ENCODE measurements at regions of chr1 and their contacts with region 1.

Region 1: DNA sequence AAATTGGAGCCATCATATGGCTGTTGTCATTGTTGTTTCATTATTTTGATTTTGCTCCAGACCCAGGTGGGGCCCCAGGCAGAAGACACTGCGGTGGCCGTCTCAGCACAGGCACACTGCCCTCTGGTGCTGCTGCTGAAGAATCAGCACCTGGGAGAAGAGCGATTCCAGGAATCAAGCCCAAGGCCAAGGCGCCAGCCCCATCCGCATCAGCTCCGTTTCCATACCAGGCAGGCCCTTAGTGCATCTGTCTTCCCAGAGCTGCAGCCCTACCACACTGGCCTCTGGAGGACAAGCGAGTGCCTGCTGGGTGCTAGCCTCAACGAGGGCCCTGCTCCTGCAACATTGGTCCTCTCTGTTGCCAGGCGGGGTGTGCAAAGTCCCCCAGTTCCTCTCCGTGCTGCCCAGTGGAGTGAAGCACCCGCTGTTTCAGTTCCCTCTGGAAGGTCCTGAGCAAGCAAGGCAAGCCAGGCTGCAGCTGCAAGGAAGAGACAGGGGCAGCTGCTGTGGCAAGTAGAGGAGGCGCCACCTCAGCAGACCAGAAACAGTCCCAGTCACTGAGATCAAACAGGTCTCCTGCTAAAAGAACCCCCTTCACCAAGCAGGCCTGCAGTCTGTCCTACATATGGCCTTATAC is 5.2 kb downstream of the GRIK3 start:
- DNase-seq: peak; percentile 95
- H3K4me3 ChIP-seq: peak overlapping the region; percentile 40
- H3K27ac ChIP-seq: peak overlapping the region; percentile 95
- H3K4me1 ChIP-seq: peaks cover 91% of the 10 kb centered on the region
- CTCF ChIP-seq: peak; percentile 81

Region 2: GRCh38 chr1:36864182-36864822 is 164.8 kb before region 1 on chr1:
- CTCF ChIA-PET with region 1: interaction called, 4 read pairs
- POLR2A ChIA-PET with region 1: interaction called, 3 read pairs
- intact Hi-C with region 1: loop called (anchors 2 kb)
- DNase-seq: peak; percentile 66
- H3K4me3 ChIP-seq: no peak overlapping the region
- H3K27ac ChIP-seq: no peak overlapping the region
- H3K4me1 ChIP-seq: peaks cover 38% of the 10 kb centered on the region
- CTCF ChIP-seq: peak; percentile 95

Region 3: GRCh38 chr1:36885538-36886357 is 143.4 kb before region 1 on chr1:
- CTCF ChIA-PET with region 1: no interaction called
- POLR2A ChIA-PET with region 1: no interaction called
- intact Hi-C with region 1: loop called (anchors 2 kb)
- DNase-seq: no peak
- H3K4me3 ChIP-seq: peak overlapping the region; percentile 37
- H3K27ac ChIP-seq: peak overlapping the region; percentile 92
- H3K4me1 ChIP-seq: peaks cover 75% of the 10 kb centered on the region
- CTCF ChIP-seq: peak; percentile 39; the same call in 1 of the 2 replicates

Region 4: DNA sequence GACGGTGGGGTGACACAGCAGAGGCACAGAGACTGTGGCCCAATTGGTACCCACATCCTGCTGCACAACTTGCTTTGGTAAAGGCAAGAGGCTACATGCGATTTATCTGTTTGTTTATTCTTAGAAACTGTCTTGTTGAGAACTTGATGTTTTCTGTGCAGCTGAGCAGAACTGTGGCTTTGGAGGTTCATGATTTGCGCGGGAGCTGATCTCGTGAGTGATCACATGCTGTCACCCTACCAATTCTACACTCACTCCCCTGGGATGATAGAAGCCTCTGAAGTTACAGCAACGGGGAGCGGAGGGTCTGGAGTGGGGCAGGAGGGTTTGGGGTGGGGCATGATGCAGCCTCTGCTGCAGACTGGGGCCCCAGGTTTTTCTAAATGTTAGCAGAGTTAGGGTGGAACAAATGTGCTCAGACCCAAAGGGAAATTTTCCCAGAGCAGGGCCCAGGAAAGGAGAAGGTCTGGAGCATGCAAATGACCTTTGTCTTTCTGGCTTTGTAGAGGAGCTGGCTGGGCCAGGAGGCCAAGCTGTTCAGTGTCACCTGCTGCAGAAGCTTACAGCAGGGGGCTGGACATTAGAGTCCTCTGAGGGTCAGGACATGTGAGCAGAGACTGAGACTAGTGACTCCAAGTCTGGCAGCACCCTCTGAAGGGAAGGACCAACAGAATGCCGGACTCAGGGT is 78.4 kb before region 1 on chr1:
- CTCF ChIA-PET with region 1: no interaction called
- POLR2A ChIA-PET with region 1: interaction called, 25 read pairs
- intact Hi-C with region 1: loop called (anchors 1 kb)
- DNase-seq: peak; percentile 97
- H3K4me3 ChIP-seq: peak overlapping the region; percentile 44
- H3K27ac ChIP-seq: peak overlapping the region; percentile 99
- H3K4me1 ChIP-seq: peaks cover 99% of the 10 kb centered on the region
- CTCF ChIP-seq: no peak

Region 5: DNA sequence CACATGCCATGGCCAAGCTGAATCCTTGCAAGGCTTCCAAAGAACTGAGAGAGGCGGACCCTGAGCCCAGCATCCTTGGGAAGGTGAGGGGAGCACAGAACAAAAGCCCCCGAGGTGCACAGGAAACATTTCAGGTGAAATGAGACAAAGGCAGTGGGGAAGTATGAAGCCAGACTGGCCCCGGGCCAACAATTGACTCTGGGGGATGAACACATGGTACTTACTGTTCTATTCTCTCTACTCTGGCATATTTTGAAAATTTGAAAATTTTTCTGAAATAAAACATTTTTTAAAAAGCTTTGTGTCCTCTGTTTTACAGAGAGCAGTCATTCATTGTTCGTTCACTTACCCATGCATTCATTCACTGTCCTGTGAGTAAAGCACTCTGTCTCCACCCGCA is 72.5 kb before region 1 on chr1:
- CTCF ChIA-PET with region 1: no interaction called
- POLR2A ChIA-PET with region 1: interaction called, 25 read pairs
- intact Hi-C with region 1: loop called (anchors 1 kb)
- DNase-seq: peak; percentile 60
- H3K4me3 ChIP-seq: no peak overlapping the region
- H3K27ac ChIP-seq: peak overlapping the region; percentile 99
- H3K4me1 ChIP-seq: peaks cover 73% of the 10 kb centered on the region
- CTCF ChIP-seq: no peak

Region 6: DNA sequence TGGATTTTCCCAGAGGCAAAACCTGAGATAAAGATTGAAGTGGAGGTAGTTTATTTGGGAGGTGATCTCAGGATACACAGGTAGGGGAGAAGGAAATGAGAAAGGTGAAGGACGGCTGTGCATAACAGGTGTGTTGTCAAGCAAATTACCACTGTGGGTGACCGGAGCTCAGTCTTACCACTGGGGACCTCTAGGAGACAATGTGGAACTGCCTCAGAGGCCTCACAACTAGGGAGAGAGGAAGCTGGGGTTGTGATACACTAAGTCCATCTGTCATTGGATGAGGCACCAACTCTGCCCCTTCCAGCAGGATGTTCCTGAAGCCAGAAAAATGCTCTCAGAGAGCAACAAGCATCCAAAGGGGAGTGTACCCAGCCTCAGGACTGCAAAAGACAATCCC is 27.4 kb before region 1 on chr1:
- CTCF ChIA-PET with region 1: no interaction called
- POLR2A ChIA-PET with region 1: interaction called, 9 read pairs
- intact Hi-C with region 1: loop called (anchors 2 kb)
- DNase-seq: peak; percentile 66
- H3K4me3 ChIP-seq: no peak overlapping the region
- H3K27ac ChIP-seq: peak overlapping the region; percentile 3
- H3K4me1 ChIP-seq: peaks cover 60% of the 10 kb centered on the region
- CTCF ChIP-seq: peak; percentile 63

Region 7: GRCh38 chr1:37096466-37096865 is 67.4 kb after region 1 on chr1:
- CTCF ChIA-PET with region 1: no interaction called
- POLR2A ChIA-PET with region 1: no interaction called
- intact Hi-C with region 1: no loop called
- DNase-seq: peak; percentile 50
- H3K4me3 ChIP-seq: no peak overlapping the region
- H3K27ac ChIP-seq: no peak overlapping the region
- H3K4me1 ChIP-seq: peaks cover 22% of the 10 kb centered on the region
- CTCF ChIP-seq: peak; percentile 77

Region 8: DNA sequence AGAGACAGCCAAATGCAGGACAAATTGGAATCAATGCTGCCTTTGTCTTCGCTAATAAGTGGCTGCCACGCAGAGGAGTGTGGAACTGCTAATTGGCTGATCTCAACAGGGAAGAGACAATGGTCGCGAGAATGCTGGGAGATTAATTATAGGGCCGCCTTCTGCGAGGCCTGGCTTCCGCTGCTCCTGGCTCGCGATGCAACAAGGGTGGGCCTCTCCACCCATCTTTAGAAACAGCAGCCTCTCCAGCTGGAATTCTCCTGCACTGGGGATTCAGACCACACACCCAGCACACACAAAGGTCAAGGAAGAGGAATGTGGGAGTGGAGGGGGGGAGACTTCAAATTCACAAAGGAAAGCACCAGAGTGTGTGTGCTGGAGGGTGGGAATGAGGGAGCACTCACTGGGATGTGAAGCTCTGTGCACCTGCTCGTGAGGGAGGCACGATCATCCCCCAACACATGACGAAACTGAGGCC is 205.9 kb after region 1 on chr1:
- CTCF ChIA-PET with region 1: no interaction called
- POLR2A ChIA-PET with region 1: no interaction called
- intact Hi-C with region 1: no loop called
- DNase-seq: no peak
- H3K4me3 ChIP-seq: no peak overlapping the region
- H3K27ac ChIP-seq: no peak overlapping the region
- H3K4me1 ChIP-seq: no peaks in the 10 kb centered on the region
- CTCF ChIP-seq: no peak

Region 9: GRCh38 chr1:37373413-37373812 is 344.3 kb after region 1 on chr1:
- CTCF ChIA-PET with region 1: no interaction called
- POLR2A ChIA-PET with region 1: no interaction called
- intact Hi-C with region 1: no loop called
- DNase-seq: no peak
- H3K4me3 ChIP-seq: no peak overlapping the region
- H3K27ac ChIP-seq: no peak overlapping the region
- H3K4me1 ChIP-seq: no peaks in the 10 kb centered on the region
- CTCF ChIP-seq: no peak